CD8-positive, alpha-beta T cell (primary cell): ENCODE measurements at regions of chr2 and their contacts with region 1.

Region 1: DNA sequence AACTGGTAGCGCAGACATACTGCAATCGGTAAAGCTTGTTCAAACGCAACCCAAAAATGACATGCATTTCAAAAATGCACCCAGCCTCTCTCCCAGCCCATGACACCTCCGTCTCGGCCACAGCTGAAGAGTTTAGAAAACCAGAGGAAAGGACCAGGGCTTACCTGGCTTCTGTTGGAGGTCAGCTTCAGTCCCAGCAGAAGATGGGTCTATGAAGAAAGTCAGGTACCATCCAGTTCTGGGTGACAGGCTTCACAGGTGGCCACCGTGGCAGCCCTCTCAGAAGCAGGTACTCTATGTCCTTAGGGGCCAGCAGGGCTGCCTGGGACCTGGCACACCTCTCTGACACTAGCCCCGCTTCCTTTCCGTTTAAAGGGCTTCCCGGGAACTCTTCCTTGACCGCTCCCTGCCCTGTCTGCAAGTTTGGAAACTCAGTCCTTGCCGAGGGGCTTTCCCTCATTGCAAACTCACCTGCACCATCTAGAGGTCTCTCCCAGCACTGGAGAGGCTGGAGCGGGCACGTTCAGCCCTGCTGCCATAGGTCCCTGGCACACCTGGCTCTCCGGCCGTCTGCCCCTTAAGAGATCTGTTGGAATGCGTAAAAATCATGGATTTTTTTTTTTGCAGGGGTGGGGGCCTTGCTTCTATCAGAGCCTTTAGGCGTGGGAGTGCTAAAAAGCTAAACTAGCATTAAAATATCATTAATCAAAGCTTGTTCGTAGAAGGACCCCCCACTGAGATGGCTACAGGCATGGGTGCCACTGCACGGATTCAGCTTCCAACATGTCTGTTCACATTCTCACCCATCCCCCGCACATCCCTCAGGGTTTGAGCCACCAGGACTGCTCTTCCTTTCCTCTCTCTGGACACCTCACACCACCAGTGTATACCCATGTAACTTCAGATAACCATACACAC is at the start of gene EDAR:
- DNase-seq: peak in 8 of 9 experiments; percentile 11 to 75 (median 54)
- ATAC-seq: peak; percentile 64
- H3K4me3 ChIP-seq: peak within 1 kb of the TSS; percentile 30 to 35
- H3K4me3 Mint-ChIP-seq: peak within 1 kb of the TSS; percentile 85
- H3K27ac ChIP-seq: no peak within 1 kb of the TSS
- H3K27ac Mint-ChIP-seq: peak within 1 kb of the TSS; percentile 88
- H3K4me1 ChIP-seq: peaks cover 32% of the 10 kb centered on the region
- H3K4me1 Mint-ChIP-seq: peaks cover 70% of the 10 kb centered on the region
- H3K27me3 ChIP-seq: no peaks in the 10 kb centered on the region
- H3K27me3 Mint-ChIP-seq: no peaks in the 10 kb centered on the region
- CTCF ChIP-seq: peak; percentile 51
- total RNA-seq, gene EDAR: 1.6 to 2.0 TPM

Region 2: DNA sequence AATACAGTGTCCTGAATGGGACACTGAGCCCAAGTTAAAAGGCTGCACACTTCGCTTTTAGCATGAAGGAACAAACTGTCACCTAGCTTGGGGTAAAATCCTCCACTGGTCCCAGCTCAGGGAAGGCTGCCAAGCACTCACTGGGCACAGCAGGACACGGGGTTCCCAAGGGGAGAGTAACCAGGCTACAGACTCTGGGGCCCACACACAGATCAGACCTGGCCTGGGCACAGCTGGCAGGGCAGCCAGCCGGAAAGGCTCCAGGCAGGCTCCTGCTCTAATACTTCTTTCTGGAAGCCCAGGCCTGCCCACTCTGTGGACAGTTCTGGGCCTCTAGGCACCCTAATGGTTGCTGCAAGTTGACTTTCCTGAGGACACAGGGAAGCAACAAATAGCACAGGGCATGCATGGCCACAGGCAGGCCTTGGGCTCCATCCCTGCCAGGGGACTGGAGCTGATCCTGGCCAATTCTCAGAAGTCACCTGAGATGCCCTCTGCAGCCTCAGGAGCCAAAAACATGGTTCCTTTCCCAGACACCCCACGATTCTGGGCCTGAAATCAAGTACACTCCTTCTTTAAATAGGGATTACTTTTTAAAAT is 768.0 kb before region 1 on chr2:
- CTCF ChIA-PET with region 1: no interaction called
- POLR2A ChIA-PET with region 1: no interaction called
- intact Hi-C with region 1: no loop called
- DNase-seq: no peak
- ATAC-seq: no peak
- H3K4me3 ChIP-seq: no peak overlapping the region
- H3K4me3 Mint-ChIP-seq: no peak overlapping the region
- H3K27ac ChIP-seq: no peak overlapping the region
- H3K27ac Mint-ChIP-seq: no peak overlapping the region
- H3K4me1 ChIP-seq: no peaks in the 10 kb centered on the region
- H3K4me1 Mint-ChIP-seq: no peaks in the 10 kb centered on the region
- H3K27me3 ChIP-seq: no peaks in the 10 kb centered on the region
- H3K27me3 Mint-ChIP-seq: no peaks in the 10 kb centered on the region
- CTCF ChIP-seq: no peak

Region 3: DNA sequence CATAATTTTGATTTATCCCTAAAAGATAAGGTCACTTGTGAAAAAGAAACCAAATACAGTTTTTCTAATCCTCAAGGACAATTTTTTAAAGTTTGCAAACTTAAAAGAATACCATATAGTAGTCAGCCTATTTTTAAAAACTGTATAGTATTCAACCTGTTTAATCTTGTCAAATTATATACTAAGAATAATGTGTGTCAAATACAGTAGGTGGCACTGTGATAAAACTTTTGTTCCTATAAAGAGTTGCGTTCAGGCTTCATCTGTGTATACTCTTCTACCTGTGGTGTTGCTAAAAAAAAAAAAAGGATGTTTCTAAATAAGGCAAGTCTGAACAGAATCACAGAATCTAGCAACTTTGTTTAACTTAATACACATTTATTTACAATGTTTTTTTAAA is 133.9 kb before region 1 on chr2:
- CTCF ChIA-PET with region 1: interaction called, 8 read pairs
- POLR2A ChIA-PET with region 1: no interaction called
- intact Hi-C with region 1: loop called (anchors 1 to 2 kb)
- DNase-seq: peak in 2 of 9 experiments; percentile 32 to 57
- ATAC-seq: peak; percentile 61
- H3K4me3 ChIP-seq: no peak overlapping the region
- H3K4me3 Mint-ChIP-seq: no peak overlapping the region
- H3K27ac ChIP-seq: no peak overlapping the region
- H3K27ac Mint-ChIP-seq: no peak overlapping the region
- H3K4me1 ChIP-seq: no peaks in the 10 kb centered on the region
- H3K4me1 Mint-ChIP-seq: peaks cover 4% of the 10 kb centered on the region
- H3K27me3 ChIP-seq: no peaks in the 10 kb centered on the region
- H3K27me3 Mint-ChIP-seq: no peaks in the 10 kb centered on the region
- CTCF ChIP-seq: peak; percentile 61

Region 4: GRCh38 chr2:108968619-108969018 is 20.4 kb before region 1 on chr2:
- CTCF ChIA-PET with region 1: interaction called, 16 read pairs
- POLR2A ChIA-PET with region 1: interaction called, 5 read pairs
- intact Hi-C with region 1: no loop called
- DNase-seq: no peak
- ATAC-seq: no peak
- H3K4me3 ChIP-seq: no peak overlapping the region
- H3K4me3 Mint-ChIP-seq: no peak overlapping the region
- H3K27ac ChIP-seq: no peak overlapping the region
- H3K27ac Mint-ChIP-seq: no peak overlapping the region
- H3K4me1 ChIP-seq: peaks cover 70% of the 10 kb centered on the region
- H3K4me1 Mint-ChIP-seq: peaks cover 88% of the 10 kb centered on the region
- H3K27me3 ChIP-seq: no peaks in the 10 kb centered on the region
- H3K27me3 Mint-ChIP-seq: no peaks in the 10 kb centered on the region
- CTCF ChIP-seq: no peak

Region 5: DNA sequence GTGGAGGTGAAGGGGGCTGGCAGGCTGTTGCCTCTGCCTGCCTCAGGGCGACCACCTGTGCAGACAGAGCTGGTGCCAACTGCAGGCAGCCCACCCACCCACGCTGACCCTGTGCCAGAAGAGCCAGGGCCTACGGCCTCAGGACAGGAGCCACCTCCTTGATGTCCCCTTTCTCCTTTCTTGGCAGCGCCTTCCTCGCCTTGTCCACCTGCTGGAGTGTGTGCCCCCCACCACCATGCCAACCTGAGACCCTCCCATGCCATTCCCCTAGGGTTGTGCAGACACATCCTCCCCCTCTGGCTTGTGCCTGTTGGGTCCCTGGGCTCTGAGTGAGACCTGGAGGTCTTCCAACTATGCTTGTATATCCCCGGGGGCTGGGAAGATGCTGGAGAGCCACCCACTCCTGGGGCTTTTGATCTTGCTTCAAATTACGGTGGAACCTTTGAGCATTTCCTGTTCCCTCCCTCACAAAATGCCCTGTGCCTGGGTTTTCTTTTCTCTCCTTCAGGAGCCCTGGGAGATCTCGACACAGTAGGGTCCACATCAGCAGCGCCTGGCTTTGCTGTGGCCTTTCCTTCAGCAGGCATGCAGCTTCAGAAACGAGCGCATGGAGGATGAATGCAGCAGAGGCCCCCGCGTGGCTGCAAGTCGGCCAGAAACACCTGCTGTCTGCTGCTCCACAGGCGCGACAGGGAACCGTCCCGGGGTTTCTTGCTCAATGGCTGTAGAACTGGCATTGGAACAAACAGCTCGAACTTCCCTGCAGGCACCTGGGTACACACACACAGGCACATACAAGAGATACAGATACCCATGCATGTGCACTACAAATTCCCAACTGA is 74.0 kb after region 1 on chr2:
- CTCF ChIA-PET with region 1: interaction called, 3 read pairs
- POLR2A ChIA-PET with region 1: no interaction called
- intact Hi-C with region 1: loop called in 1 of 2 experiments (anchors 5 kb)
- DNase-seq: peak in 3 of 9 experiments; percentile 12 to 54 (median 20)
- ATAC-seq: no peak
- H3K4me3 ChIP-seq: no peak overlapping the region
- H3K4me3 Mint-ChIP-seq: no peak overlapping the region
- H3K27ac ChIP-seq: no peak overlapping the region
- H3K27ac Mint-ChIP-seq: no peak overlapping the region
- H3K4me1 ChIP-seq: peaks cover 19% of the 10 kb centered on the region
- H3K4me1 Mint-ChIP-seq: peaks cover 43% of the 10 kb centered on the region
- H3K27me3 ChIP-seq: no peaks in the 10 kb centered on the region
- H3K27me3 Mint-ChIP-seq: no peaks in the 10 kb centered on the region
- CTCF ChIP-seq: no peak

Region 6: DNA sequence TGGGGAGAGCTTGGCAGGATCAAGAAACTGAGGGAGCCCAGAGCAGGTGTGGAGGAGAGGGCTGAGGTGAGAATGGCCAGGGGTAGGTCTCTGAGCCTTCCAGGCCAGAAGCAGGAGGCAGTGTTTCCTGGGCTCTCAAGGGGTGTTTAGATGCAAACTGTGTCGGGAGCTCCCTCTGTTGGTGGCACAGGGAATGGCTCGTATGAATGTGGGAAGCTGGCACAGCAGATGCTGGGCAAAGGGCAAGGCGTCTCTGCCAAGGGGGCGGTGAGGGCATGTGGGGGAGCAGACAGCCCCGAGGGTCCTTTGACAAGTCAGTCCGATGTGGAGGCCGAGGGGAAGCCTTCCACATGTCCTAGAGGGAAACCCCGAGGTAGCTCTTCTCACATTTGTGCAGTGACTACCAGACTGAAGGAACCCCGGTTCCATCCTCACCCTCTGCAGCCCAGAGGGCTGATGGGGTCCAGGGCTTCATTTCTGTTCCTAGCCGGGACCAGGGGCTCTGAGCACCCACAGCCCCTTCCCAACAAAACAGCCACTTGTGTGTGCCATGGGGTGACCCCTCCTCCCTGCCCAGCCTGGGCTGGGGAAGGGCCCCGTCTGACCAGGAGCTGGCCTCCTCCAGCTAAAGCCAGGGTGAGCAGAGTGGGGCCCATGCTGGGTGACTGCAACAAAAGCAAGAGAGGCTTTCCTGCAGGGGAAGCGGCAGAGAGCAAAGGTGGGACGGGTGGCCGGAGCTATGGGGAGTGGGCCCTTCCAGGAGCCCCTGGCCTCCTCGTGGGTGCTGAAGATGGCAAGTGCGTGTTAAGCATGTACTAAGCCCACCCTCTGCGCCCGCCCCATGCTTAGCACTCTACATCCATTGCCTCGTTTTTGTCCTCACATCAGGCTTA is 521.3 kb after region 1 on chr2:
- CTCF ChIA-PET with region 1: interaction called, 5 read pairs
- POLR2A ChIA-PET with region 1: no interaction called
- intact Hi-C with region 1: loop called in 1 of 2 experiments (anchors 10 kb)
- DNase-seq: peak; percentile 58 to 87 (median 74)
- ATAC-seq: peak; percentile 92
- H3K4me3 ChIP-seq: no peak overlapping the region
- H3K4me3 Mint-ChIP-seq: no peak overlapping the region
- H3K27ac ChIP-seq: no peak overlapping the region
- H3K27ac Mint-ChIP-seq: no peak overlapping the region
- H3K4me1 ChIP-seq: no peaks in the 10 kb centered on the region
- H3K4me1 Mint-ChIP-seq: peaks cover 5% of the 10 kb centered on the region
- H3K27me3 ChIP-seq: no peaks in the 10 kb centered on the region
- H3K27me3 Mint-ChIP-seq: no peaks in the 10 kb centered on the region
- CTCF ChIP-seq: peak; percentile 79